ENCODE measurements at regions of chr12 and their contacts with region 1.

Region 1: DNA sequence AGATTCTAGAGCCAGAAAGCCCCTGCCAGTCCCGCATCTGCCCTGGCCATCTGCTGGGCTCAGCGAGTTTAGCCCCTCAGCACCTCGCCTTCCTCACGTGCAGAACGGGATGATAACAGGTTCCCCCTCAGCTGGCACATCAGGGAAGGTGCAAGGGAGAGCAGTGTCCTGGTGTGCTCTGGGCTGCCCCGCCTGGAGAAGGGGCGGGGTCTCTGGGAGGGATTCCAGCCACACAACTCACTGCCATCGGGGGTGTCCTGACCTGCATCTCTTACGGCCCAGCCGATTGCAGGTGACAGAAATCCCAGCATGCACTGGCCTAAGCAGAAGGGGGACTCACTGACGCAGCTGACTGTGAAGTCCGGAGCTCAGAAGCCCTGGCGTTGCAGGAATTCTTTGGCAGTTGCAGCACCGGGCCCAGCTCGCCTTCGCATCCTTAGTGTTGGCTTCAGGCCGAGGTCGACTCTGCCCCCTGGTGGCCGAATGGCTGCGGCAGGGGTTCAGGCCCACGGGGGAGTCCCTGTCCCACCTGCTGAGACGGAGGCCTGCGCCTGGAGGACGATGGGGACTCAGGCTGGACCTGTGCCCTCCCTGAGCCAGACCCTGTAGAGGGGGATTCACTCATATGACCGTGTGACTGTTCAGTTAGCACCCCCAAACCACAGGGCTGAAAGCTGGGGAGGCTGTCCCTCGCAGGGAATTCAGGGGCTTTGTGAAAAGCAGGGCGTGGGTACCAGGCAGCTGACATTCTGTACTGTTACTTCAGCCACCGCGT is 178.6 kb downstream of the ADGRD1 start:
- DNase-seq: peak; percentile 55 to 86 (median 70)
- ATAC-seq: peak; percentile 69
- H3K4me3 ChIP-seq: no peak overlapping the region
- H3K4me3 Mint-ChIP-seq: no peak overlapping the region
- H3K27ac ChIP-seq: no peak overlapping the region
- H3K27ac Mint-ChIP-seq: no peak overlapping the region
- H3K4me1 ChIP-seq: no peaks in the 10 kb centered on the region
- H3K4me1 Mint-ChIP-seq: peaks cover 2% of the 10 kb centered on the region
- H3K27me3 ChIP-seq: no peaks in the 10 kb centered on the region
- H3K27me3 Mint-ChIP-seq: peaks cover 5% of the 10 kb centered on the region
- CTCF ChIP-seq: peak; percentile 76

Region 2: GRCh38 chr12:130761537-130762318 is 370.6 kb before region 1 on chr12:
- CTCF ChIA-PET with region 1: interaction called, 3 read pairs
- POLR2A ChIA-PET with region 1: no interaction called
- intact Hi-C with region 1: loop called (anchors 1 to 2 kb)
- DNase-seq: peak; percentile 26 to 74 (median 55)
- ATAC-seq: peak; percentile 48
- H3K4me3 ChIP-seq: peak overlapping the region; percentile 24 to 37
- H3K4me3 Mint-ChIP-seq: peak overlapping the region; percentile 59
- H3K27ac ChIP-seq: no peak overlapping the region
- H3K27ac Mint-ChIP-seq: no peak overlapping the region
- H3K4me1 ChIP-seq: peaks cover 23% of the 10 kb centered on the region
- H3K4me1 Mint-ChIP-seq: no peaks in the 10 kb centered on the region
- H3K27me3 ChIP-seq: no peaks in the 10 kb centered on the region
- H3K27me3 Mint-ChIP-seq: peaks cover 2% of the 10 kb centered on the region
- CTCF ChIP-seq: peak; percentile 40

Region 3: DNA sequence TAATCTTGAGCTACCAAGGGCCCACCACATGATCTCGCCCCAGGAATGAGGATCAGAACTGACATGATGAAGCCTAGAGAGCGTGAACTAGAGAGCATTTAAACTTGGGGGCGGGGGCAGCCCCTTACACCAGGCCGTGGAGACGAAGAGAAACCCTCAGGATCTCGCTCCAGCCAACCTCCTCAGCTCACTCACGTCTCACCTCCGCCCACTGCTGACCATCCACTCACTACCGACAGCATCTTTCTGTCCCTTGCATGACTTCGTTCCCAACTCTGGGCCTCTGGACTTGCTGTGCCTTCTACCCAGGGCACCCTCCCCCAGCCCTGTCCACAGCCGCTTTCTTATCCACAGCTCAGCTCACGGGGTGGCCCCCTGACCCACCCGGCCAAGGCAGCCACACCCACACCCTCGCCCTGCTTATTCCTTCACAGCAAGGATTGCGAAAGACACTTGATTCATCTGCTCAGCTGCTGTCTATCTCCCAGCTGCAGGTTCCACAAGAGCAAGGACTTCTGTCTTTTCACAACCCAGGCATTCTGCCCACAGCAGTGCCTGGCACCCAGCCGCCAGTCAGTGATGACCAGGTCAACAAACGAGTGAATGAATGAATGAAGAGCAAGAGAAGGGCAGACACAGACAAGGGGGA is 299.6 kb before region 1 on chr12:
- CTCF ChIA-PET with region 1: interaction called, 77 read pairs
- POLR2A ChIA-PET with region 1: no interaction called
- intact Hi-C with region 1: no loop called
- DNase-seq: no peak
- ATAC-seq: no peak
- H3K4me3 ChIP-seq: no peak overlapping the region
- H3K4me3 Mint-ChIP-seq: no peak overlapping the region
- H3K27ac ChIP-seq: no peak overlapping the region
- H3K27ac Mint-ChIP-seq: no peak overlapping the region
- H3K4me1 ChIP-seq: no peaks in the 10 kb centered on the region
- H3K4me1 Mint-ChIP-seq: peaks cover 24% of the 10 kb centered on the region
- H3K27me3 ChIP-seq: no peaks in the 10 kb centered on the region
- H3K27me3 Mint-ChIP-seq: no peaks in the 10 kb centered on the region
- CTCF ChIP-seq: no peak

Region 4: GRCh38 chr12:131104463-131105350 is 27.6 kb before region 1 on chr12:
- CTCF ChIA-PET with region 1: interaction called, 80 read pairs
- POLR2A ChIA-PET with region 1: no interaction called
- intact Hi-C with region 1: loop called (anchors 1 kb)
- DNase-seq: peak; percentile 61 to 85 (median 79)
- ATAC-seq: peak; percentile 52
- H3K4me3 ChIP-seq: no peak overlapping the region
- H3K4me3 Mint-ChIP-seq: peak overlapping the region; percentile 35
- H3K27ac ChIP-seq: no peak overlapping the region
- H3K27ac Mint-ChIP-seq: peak overlapping the region; percentile 18
- H3K4me1 ChIP-seq: peaks cover 17% of the 10 kb centered on the region
- H3K4me1 Mint-ChIP-seq: peaks cover 17% of the 10 kb centered on the region
- H3K27me3 ChIP-seq: no peaks in the 10 kb centered on the region
- H3K27me3 Mint-ChIP-seq: peaks cover 2% of the 10 kb centered on the region
- CTCF ChIP-seq: peak; percentile 71

Region 5: GRCh38 chr12:131121705-131122405 is 10.4 kb before region 1 on chr12:
- CTCF ChIA-PET with region 1: interaction called, 22 read pairs
- POLR2A ChIA-PET with region 1: no interaction called
- intact Hi-C with region 1: no loop called
- DNase-seq: no peak
- ATAC-seq: no peak
- H3K4me3 ChIP-seq: no peak overlapping the region
- H3K4me3 Mint-ChIP-seq: no peak overlapping the region
- H3K27ac ChIP-seq: no peak overlapping the region
- H3K27ac Mint-ChIP-seq: no peak overlapping the region
- H3K4me1 ChIP-seq: no peaks in the 10 kb centered on the region
- H3K4me1 Mint-ChIP-seq: no peaks in the 10 kb centered on the region
- H3K27me3 ChIP-seq: no peaks in the 10 kb centered on the region
- H3K27me3 Mint-ChIP-seq: no peaks in the 10 kb centered on the region
- CTCF ChIP-seq: no peak

Region 6: DNA sequence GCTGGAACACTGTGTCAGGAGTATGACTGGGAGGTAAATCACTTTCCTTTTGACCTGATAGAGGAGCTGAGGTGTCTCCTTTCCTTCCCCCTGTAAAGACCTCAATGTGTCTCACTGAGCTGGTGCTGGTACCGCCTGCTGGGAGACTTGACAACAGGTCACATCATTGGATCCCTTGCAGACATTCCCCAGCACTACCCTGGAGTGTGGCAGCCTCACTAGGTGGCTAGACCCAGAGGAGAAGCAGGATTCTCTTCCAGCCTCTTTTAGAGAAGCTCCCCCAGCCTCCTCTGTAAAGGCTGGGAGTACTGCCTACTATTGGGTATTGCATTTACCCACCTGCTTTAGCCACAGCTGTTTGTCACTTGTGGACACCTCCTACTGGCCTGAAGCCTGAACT is 45.3 kb after region 1 on chr12:
- CTCF ChIA-PET with region 1: no interaction called
- POLR2A ChIA-PET with region 1: no interaction called
- intact Hi-C with region 1: no loop called
- DNase-seq: peak in 1 of 9 experiments; percentile 17
- ATAC-seq: no peak
- H3K4me3 ChIP-seq: no peak overlapping the region
- H3K4me3 Mint-ChIP-seq: no peak overlapping the region
- H3K27ac ChIP-seq: no peak overlapping the region
- H3K27ac Mint-ChIP-seq: no peak overlapping the region
- H3K4me1 ChIP-seq: no peaks in the 10 kb centered on the region
- H3K4me1 Mint-ChIP-seq: no peaks in the 10 kb centered on the region
- H3K27me3 ChIP-seq: no peaks in the 10 kb centered on the region
- H3K27me3 Mint-ChIP-seq: peaks cover 10% of the 10 kb centered on the region
- CTCF ChIP-seq: no peak

Measured in CD8-positive, alpha-beta T cell (primary cell).